H1 (cell line): ENCODE measurements at regions of chr3 and their contacts with region 1.

Region 1: GRCh38 chr3:134473868-134474546 is 11.8 kb downstream of the ANAPC13 start:
- DNase-seq: peak in 1 of 2 experiments; percentile 88
- H3K4me3 ChIP-seq: no peak overlapping the region
- H3K27ac ChIP-seq: no peak overlapping the region
- H3K4me1 ChIP-seq: peaks cover 0 to 3% (median 1%) of the 10 kb centered on the region in 4 experiments; a peak in 3 of 7 replicates
- H3K27me3 ChIP-seq: no peaks in the 10 kb centered on the region; a peak in 1 of 7 replicates
- CTCF ChIP-seq: peak in 2 of 3 experiments; percentile 55 to 72; a peak in 3 of 4 replicates
- EP300 ChIP-seq: no peak
- POLR2A ChIP-seq: no peak
- RAD21 ChIP-seq: peak; percentile 85 to 89

Region 2: DNA sequence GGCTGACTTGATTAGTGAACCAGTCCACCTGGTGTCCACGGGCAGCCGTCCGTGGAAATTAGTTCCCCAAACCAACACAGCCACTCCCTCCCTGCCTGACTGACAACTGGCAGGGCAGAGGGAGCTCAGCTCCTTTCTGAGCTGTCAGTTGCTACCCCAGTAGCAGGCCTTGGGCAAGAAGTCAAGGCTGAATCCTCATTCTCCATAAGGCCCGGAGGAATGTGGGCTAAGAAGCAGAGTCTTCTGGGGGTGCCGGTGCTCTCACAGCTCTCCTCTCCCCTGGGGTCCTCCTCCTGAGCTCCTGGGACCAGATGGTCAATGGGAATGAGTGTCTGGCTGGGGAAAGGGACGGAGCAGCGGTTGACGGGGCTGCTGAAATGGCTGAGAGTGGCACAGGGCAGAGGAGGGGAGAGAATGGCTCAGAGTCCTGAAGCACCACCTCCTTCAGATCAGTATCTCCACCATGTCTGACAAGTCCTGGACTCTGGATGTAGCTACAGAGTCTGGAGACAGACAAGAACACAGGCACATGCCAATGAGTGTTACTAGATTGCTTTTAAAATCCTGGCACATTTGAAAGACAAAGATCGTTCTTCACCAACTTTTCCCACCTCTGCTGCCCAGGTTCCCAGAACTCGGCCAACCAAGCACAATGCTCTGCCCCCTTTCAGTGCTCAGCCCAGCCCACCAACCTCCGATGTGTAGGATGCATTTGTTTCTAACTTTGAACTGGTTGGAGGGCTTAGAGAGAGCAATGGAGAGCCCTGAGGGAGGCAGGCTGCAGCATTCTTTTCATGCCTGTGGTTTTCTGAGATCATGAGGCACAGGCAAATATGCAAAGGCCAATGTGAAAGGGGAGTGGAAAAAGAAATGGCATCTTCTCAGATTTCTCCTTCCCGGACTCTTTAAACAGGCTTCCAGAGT is 116.5 kb before region 1 on chr3:
- CTCF ChIA-PET with region 1: interaction called, 46 read pairs
- POLR2A ChIA-PET with region 1: interaction called, 24 read pairs
- DNase-seq: peak in 1 of 2 experiments; percentile 60
- H3K4me3 ChIP-seq: no peak overlapping the region
- H3K27ac ChIP-seq: peak overlapping the region; percentile 23; the same call in 1 of the 2 replicates
- H3K4me1 ChIP-seq: peaks cover 0 to 10% (median 4%) of the 10 kb centered on the region in 4 experiments; a peak in 6 of 7 replicates
- H3K27me3 ChIP-seq: no peaks in the 10 kb centered on the region
- CTCF ChIP-seq: no peak
- EP300 ChIP-seq: no peak
- POLR2A ChIP-seq: peak in 1 of 2 experiments; percentile 15; a peak in 1 of 3 replicates
- RAD21 ChIP-seq: no peak

Region 3: GRCh38 chr3:134373994-134374790 is 99.8 kb before region 1 on chr3 and contains the start of gene AMOTL2:
- CTCF ChIA-PET with region 1: interaction called, 17 read pairs
- POLR2A ChIA-PET with region 1: interaction called, 11 read pairs
- DNase-seq: peak; percentile 87 to 92
- H3K4me3 ChIP-seq: peak within 1 kb of the TSS; percentile 68 to 96 (median 88)
- H3K27ac ChIP-seq: peak within 1 kb of the TSS; percentile 99
- H3K4me1 ChIP-seq: peaks cover 20 to 44% (median 33%) of the 10 kb centered on the region in 4 experiments
- H3K27me3 ChIP-seq: peaks cover 7 to 32% (median 24%) of the 10 kb centered on the region in 4 experiments
- CTCF ChIP-seq: 0 out of 4 replicates have a peak, but pooled peaks of 1 of the 3 experiments have one; percentile 1
- EP300 ChIP-seq: peak in 1 of 2 experiments; percentile 94; a peak in 1 of 3 replicates
- POLR2A ChIP-seq: peak in 1 of 2 experiments; percentile 100; a peak in 2 of 3 replicates
- RAD21 ChIP-seq: no peak; a peak in 1 of 4 replicates
- total RNA-seq, gene AMOTL2: 60.3 and 63.7 TPM in 2 replicates

Region 4: GRCh38 chr3:134449277-134449676 is 24.7 kb before region 1 on chr3:
- CTCF ChIA-PET with region 1: interaction called, 38 read pairs
- POLR2A ChIA-PET with region 1: interaction called, 3 read pairs
- DNase-seq: peak in 1 of 2 experiments; percentile 59
- H3K4me3 ChIP-seq: no peak overlapping the region
- H3K27ac ChIP-seq: no peak overlapping the region
- H3K4me1 ChIP-seq: peaks cover 0 to 3% (median 2%) of the 10 kb centered on the region in 4 experiments; a peak in 4 of 7 replicates
- H3K27me3 ChIP-seq: peaks cover 0 to 4% (median 0%) of the 10 kb centered on the region in 4 experiments; a peak in 2 of 7 replicates
- CTCF ChIP-seq: peak; percentile 45 to 73 (median 59)
- EP300 ChIP-seq: no peak
- POLR2A ChIP-seq: no peak
- RAD21 ChIP-seq: peak; percentile 62 to 75